ENCODE measurements at regions of chr1 and their contacts with region 1.

Region 1: GRCh38 chr1:199102239-199102638 is 463.4 kb downstream of the PTPRC start:
- DNase-seq: peak in 1 of 9 experiments; percentile 15
- ATAC-seq: peak; percentile 11
- H3K4me3 ChIP-seq: no peak overlapping the region
- H3K4me3 Mint-ChIP-seq: no peak overlapping the region
- H3K27ac ChIP-seq: no peak overlapping the region
- H3K27ac Mint-ChIP-seq: no peak overlapping the region
- H3K4me1 ChIP-seq: no peaks in the 10 kb centered on the region
- H3K4me1 Mint-ChIP-seq: no peaks in the 10 kb centered on the region
- H3K27me3 ChIP-seq: no peaks in the 10 kb centered on the region
- H3K27me3 Mint-ChIP-seq: no peaks in the 10 kb centered on the region
- CTCF ChIP-seq: no peak

Region 2: DNA sequence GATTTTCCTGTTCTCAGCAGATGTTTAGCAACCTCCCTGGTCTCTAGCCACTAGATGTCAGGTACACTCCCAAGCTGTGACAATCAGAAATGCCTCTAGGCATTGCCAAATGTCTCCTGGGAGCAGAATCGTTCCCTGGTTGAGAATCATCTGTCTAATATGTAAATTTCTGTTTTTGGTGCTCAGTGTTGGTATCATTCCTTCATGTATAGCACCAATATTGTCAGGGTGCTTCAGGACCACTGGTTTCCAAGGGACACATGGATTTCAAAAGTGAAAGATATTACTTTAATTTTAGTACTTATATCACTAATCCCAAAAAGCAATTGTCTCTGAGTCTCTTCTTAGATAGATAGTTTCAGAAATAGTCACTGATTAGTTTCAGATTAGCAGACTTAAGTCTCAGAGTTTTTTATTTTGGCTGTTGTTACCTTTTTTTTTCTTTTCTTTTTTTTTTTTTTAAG is 303.3 kb before region 1 on chr1:
- CTCF ChIA-PET with region 1: no interaction called
- POLR2A ChIA-PET with region 1: no interaction called
- intact Hi-C with region 1: no loop called
- DNase-seq: no peak
- ATAC-seq: no peak
- H3K4me3 ChIP-seq: no peak overlapping the region
- H3K4me3 Mint-ChIP-seq: no peak overlapping the region
- H3K27ac ChIP-seq: no peak overlapping the region
- H3K27ac Mint-ChIP-seq: no peak overlapping the region
- H3K4me1 ChIP-seq: no peaks in the 10 kb centered on the region
- H3K4me1 Mint-ChIP-seq: no peaks in the 10 kb centered on the region
- H3K27me3 ChIP-seq: no peaks in the 10 kb centered on the region
- H3K27me3 Mint-ChIP-seq: no peaks in the 10 kb centered on the region
- CTCF ChIP-seq: no peak

Region 3: GRCh38 chr1:199138061-199138460 is 35.8 kb after region 1 on chr1:
- CTCF ChIA-PET with region 1: no interaction called
- POLR2A ChIA-PET with region 1: no interaction called
- intact Hi-C with region 1: loop called in 1 of 2 experiments (anchors 1 kb)
- DNase-seq: no peak
- ATAC-seq: no peak
- H3K4me3 ChIP-seq: no peak overlapping the region
- H3K4me3 Mint-ChIP-seq: no peak overlapping the region
- H3K27ac ChIP-seq: no peak overlapping the region
- H3K27ac Mint-ChIP-seq: no peak overlapping the region
- H3K4me1 ChIP-seq: no peaks in the 10 kb centered on the region
- H3K4me1 Mint-ChIP-seq: peaks cover 2% of the 10 kb centered on the region
- H3K27me3 ChIP-seq: no peaks in the 10 kb centered on the region
- H3K27me3 Mint-ChIP-seq: no peaks in the 10 kb centered on the region
- CTCF ChIP-seq: no peak

Measured in CD8-positive, alpha-beta T cell (primary cell).